ENCODE measurements at regions of chr10 and their contacts with region 1.

Region 1: GRCh38 chr10:34677591-34677990 is 137.5 kb downstream of the PARD3 start:
- DNase-seq: no peak
- H3K4me3 ChIP-seq: no peak overlapping the region
- H3K27ac ChIP-seq: no peak overlapping the region
- H3K4me1 ChIP-seq: peaks cover 4% of the 10 kb centered on the region
- H3K27me3 ChIP-seq: no peaks in the 10 kb centered on the region
- CTCF ChIP-seq: no peak
- EP300 ChIP-seq: no peak
- POLR2A ChIP-seq: no peak

Region 2: DNA sequence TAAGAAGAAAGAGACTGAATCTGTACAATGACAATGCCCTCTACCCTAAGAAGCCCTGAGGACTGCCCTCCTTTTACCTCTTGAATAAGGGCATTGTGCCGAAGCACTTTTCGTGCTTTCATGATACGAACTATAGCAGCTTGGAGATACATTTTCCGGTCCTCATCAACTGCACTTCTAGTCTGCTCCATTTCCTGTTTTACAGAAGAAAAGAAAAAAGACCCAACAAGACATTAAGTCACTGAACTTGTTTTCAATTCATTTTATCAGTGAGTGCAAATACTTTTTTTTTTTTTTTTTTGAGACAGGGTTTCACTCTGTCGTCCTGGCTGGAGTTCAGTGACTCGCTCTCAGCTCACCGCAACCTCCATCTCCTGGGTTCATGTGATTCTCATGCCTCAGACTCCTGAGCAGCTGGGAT is 334.2 kb after region 1 on chr10:
- intact Hi-C with region 1: loop called in 1 of 4 experiments (anchors 10 kb)
- DNase-seq: no peak
- H3K4me3 ChIP-seq: no peak overlapping the region
- H3K27ac ChIP-seq: no peak overlapping the region
- H3K4me1 ChIP-seq: no peaks in the 10 kb centered on the region
- H3K27me3 ChIP-seq: no peaks in the 10 kb centered on the region
- CTCF ChIP-seq: no peak
- EP300 ChIP-seq: no peak
- POLR2A ChIP-seq: no peak